ENCODE measurements at regions of chr9 and their contacts with region 1.

Region 1: GRCh38 chr9:132240753-132241493 is 79.1 kb downstream of the NTNG2 start:
- DNase-seq: peak; percentile 100
- ATAC-seq: peak; percentile 93
- H3K4me3 Mint-ChIP-seq: peak overlapping the region; percentile 89
- H3K27ac Mint-ChIP-seq: 0 out of 2 replicates have a peak overlapping the region, but pooled peaks have one; percentile 45
- H3K4me1 Mint-ChIP-seq: peaks cover 25% of the 10 kb centered on the region
- H3K27me3 Mint-ChIP-seq: peaks cover 39% of the 10 kb centered on the region
- CTCF ChIP-seq: no peak

Region 2: GRCh38 chr9:131762356-131762932 is 478.5 kb before region 1 on chr9:
- CTCF ChIA-PET with region 1: interaction called, 13 read pairs
- POLR2A ChIA-PET with region 1: no interaction called
- DNase-seq: peak; percentile 92
- ATAC-seq: peak; percentile 100
- H3K4me3 Mint-ChIP-seq: peak overlapping the region; percentile 13; the same call in 1 of the 2 replicates
- H3K27ac Mint-ChIP-seq: no peak overlapping the region
- H3K4me1 Mint-ChIP-seq: no peaks in the 10 kb centered on the region
- H3K27me3 Mint-ChIP-seq: no peaks in the 10 kb centered on the region
- CTCF ChIP-seq: peak; percentile 98

Region 3: GRCh38 chr9:132160802-132161742 is 79.9 kb before region 1 on chr9:
- CTCF ChIA-PET with region 1: interaction called, 343 read pairs
- POLR2A ChIA-PET with region 1: interaction called, 5 read pairs
- DNase-seq: no peak
- ATAC-seq: peak; percentile 21
- H3K4me3 Mint-ChIP-seq: peak overlapping the region; percentile 81
- H3K27ac Mint-ChIP-seq: no peak overlapping the region
- H3K4me1 Mint-ChIP-seq: peaks cover 15% of the 10 kb centered on the region
- H3K27me3 Mint-ChIP-seq: peaks cover 60% of the 10 kb centered on the region
- CTCF ChIP-seq: no peak

Region 4: DNA sequence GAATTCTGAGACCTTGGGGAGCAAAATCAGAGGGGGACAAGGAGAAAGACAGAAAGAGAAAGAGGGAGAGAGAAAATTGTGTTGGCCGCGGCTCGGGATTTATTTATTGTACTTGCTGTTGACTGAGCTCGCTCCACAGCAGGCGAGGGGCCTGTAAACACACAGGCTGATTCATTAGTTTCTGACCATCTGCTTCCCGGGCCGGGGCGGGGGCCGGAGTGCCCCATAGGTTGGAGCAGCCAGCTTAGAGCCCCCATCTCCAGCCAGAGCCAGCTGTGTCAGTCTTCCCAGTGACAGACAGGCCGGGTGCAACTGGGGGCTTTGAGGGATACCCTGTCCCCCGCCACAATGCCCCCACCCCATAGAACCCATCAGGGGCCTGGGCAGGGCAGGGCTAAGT is 48.2 kb before region 1 on chr9:
- CTCF ChIA-PET with region 1: interaction called, 140 read pairs
- POLR2A ChIA-PET with region 1: no interaction called
- DNase-seq: no peak
- ATAC-seq: no peak
- H3K4me3 Mint-ChIP-seq: no peak overlapping the region
- H3K27ac Mint-ChIP-seq: no peak overlapping the region
- H3K4me1 Mint-ChIP-seq: peaks cover under 1% of the 10 kb centered on the region; the same call in 1 of the 2 replicates
- H3K27me3 Mint-ChIP-seq: peaks cover 16% of the 10 kb centered on the region
- CTCF ChIP-seq: no peak

Region 5: GRCh38 chr9:132221941-132222340 is 19.0 kb before region 1 on chr9:
- CTCF ChIA-PET with region 1: interaction called, 21 read pairs
- POLR2A ChIA-PET with region 1: no interaction called
- DNase-seq: no peak
- ATAC-seq: no peak
- H3K4me3 Mint-ChIP-seq: no peak overlapping the region
- H3K27ac Mint-ChIP-seq: no peak overlapping the region; the same call in 1 of the 2 replicates
- H3K4me1 Mint-ChIP-seq: 0 out of 2 replicates have a peak, but pooled peaks cover 3% of the 10 kb centered on the region
- H3K27me3 Mint-ChIP-seq: no peaks in the 10 kb centered on the region
- CTCF ChIP-seq: no peak

Region 6: DNA sequence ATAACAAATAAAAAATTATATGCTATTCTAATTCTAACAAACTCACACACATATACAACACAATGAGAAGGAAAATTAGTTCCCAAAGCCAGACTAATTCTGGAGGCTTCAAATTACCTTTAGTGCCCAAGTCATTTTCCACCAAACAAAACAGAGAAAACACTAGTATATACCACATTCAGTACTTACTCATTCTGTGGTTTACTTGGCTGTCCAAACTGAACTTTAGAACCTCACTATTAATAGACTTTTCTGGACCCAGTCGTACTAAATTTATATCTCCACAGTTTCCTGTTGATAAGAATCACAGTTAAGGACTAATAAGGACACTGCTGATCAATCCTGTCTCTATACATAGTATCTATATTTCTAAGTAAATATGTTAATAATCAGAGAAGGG is 47.4 kb after region 1 on chr9:
- CTCF ChIA-PET with region 1: no interaction called
- POLR2A ChIA-PET with region 1: no interaction called
- DNase-seq: no peak
- ATAC-seq: no peak
- H3K4me3 Mint-ChIP-seq: no peak overlapping the region
- H3K27ac Mint-ChIP-seq: no peak overlapping the region
- H3K4me1 Mint-ChIP-seq: no peaks in the 10 kb centered on the region
- H3K27me3 Mint-ChIP-seq: no peaks in the 10 kb centered on the region
- CTCF ChIP-seq: no peak

Region 7: DNA sequence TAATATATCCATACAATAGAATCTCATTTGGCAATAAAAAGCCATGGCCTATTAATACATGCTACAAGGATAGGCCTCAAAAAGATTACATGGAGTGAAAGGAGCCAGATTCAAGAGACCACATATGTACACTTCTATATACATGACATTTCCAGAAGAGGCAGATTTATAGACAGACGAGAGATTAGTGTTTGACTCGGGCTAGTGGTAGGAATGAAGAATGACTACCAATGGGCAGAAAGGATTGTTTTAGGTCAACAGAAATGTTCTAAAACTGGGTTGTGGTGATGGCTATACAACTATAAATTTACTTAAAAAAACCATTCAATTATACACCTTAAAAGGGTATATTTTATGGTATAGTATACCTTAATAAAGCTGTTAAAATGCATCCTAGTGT is 72.0 kb after region 1 on chr9:
- CTCF ChIA-PET with region 1: no interaction called
- POLR2A ChIA-PET with region 1: no interaction called
- DNase-seq: no peak
- ATAC-seq: no peak
- H3K4me3 Mint-ChIP-seq: no peak overlapping the region
- H3K27ac Mint-ChIP-seq: no peak overlapping the region
- H3K4me1 Mint-ChIP-seq: no peaks in the 10 kb centered on the region
- H3K27me3 Mint-ChIP-seq: no peaks in the 10 kb centered on the region
- CTCF ChIP-seq: no peak